Activated CD4-positive, alpha-beta T cell treated with anti-CD3 and anti-CD28 coated beads for 36 hours (primary cell): ENCODE measurements at regions of chr19 and their contacts with region 1.

Region 1: DNA sequence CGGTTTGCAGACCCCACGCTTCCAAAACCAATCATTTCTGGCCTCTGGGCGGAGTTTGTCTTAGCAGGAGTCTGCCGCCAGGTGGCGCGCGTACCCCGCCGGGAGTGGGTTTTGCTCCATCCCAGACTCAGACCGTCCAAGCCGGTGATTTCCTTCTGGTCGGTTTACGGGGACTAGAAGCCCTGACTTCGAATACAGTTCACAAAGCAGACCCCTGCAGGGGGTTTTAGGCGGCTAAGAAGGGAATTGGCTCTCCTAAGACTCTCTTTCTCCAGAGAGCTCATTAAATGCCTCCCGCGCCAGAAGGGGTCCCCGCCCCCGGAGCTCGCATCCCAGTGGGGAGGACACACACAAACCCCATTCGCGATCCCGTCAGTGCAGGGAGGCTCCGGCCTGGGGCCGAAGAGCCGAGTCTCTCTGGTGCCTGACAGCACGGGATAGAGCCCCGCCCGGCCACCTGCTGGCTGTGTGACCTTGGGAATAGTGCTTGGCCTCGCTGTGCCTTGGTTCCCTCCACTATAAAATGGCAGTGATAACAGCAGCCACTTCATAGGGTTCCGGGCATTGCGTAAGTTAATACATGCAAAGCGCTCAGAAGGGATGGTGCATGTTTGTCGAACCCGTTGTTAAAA is 8.6 kb upstream of the NUP62 start:
- DNase-seq: peak; percentile 88
- ATAC-seq: peak; percentile 85
- H3K4me3 Mint-ChIP-seq: no peak overlapping the region
- H3K27ac Mint-ChIP-seq: no peak overlapping the region
- H3K4me1 Mint-ChIP-seq: peaks cover 13% of the 10 kb centered on the region
- H3K27me3 Mint-ChIP-seq: peaks cover 4% of the 10 kb centered on the region

Region 2: DNA sequence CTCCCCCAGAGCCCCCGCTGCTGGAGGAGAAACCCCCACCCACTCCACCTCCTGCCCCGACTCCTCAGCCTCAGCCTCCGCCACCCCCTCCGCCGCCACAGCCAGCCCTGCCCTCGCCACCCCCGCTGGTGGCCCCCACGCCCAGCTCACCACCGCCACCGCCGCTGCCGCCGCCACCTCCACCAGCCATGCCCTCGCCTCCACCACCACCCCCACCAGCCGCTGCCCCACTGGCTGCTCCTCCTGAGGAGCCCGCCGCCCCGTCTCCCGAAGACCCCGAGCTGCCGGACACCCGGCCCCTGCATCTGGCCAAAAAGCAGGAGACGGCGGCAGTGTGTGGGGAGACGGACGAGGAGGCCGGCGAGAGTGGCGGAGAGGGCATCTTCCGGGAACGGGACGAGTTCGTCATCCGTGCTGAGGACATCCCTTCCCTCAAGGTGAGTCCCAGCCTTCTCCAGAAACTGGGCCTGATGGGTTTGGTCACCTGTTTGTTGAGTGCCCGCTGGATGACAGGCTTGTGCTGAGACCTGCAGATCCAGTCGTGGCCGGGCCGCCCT is 336.3 kb before region 1 on chr19:
- CTCF ChIA-PET with region 1: no interaction called
- POLR2A ChIA-PET with region 1: no interaction called
- intact Hi-C with region 1: no loop called
- DNase-seq: no peak
- ATAC-seq: no peak
- H3K4me3 Mint-ChIP-seq: no peak overlapping the region
- H3K27ac Mint-ChIP-seq: no peak overlapping the region
- H3K4me1 Mint-ChIP-seq: peaks cover 15% of the 10 kb centered on the region
- H3K27me3 Mint-ChIP-seq: no peaks in the 10 kb centered on the region

Region 3: GRCh38 chr19:49949744-49950589 is 12.1 kb after region 1 on chr19:
- CTCF ChIA-PET with region 1: interaction called, 10 read pairs
- POLR2A ChIA-PET with region 1: no interaction called
- intact Hi-C with region 1: no loop called
- DNase-seq: no peak
- ATAC-seq: no peak
- H3K4me3 Mint-ChIP-seq: no peak overlapping the region
- H3K27ac Mint-ChIP-seq: no peak overlapping the region
- H3K4me1 Mint-ChIP-seq: no peaks in the 10 kb centered on the region
- H3K27me3 Mint-ChIP-seq: peaks cover 20% of the 10 kb centered on the region